Dorsolateral prefrontal cortex (tissue), 120 donors: ENCODE measurements at regions of chr18 and their contacts with region 1.

Region 1: DNA sequence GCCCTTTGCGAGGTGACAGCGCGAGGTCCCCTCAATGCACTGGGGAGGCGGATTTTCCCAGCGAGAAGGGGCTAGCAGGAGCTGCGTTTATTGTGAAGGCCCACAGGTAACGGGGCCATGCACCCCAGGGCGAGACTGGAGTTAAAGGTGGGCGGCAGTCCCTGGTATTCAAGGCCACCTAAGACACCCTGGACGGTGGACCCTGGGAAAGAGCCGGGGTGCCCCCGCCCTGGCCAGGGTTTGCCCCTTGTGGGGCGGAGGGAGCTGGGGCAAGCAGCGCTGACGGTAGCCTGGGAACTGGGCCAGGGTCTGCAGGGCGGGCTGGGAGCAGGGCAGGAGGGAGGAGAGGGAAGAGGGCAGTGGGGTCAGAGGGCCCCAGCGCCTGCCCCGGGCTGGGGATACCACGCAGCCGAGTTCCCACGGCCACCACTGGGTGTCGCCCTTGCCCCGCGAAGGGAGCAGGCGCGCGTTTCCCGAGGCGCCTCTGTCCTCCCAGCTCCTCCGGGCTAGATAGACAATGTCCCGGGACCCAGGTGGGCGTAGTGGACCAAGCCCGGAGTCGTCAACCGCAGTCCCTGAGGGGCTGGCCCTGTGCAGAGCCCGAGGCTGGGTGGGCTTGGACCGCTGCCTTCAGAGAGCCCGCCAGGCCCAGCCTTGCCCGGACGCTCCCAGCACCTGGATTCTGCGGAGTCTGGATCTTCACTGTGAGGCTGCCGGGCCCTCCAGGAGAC is 80.2 kb downstream of the SMAD4 start:
- DNase-seq: peak; percentile 46 to 84 (median 58)
- H3K4me3 ChIP-seq: peak overlapping the region in 27 of 59 donors; percentile 14 to 51 (median 37)
- H3K27ac ChIP-seq: no peak overlapping the region
- H3K27me3 ChIP-seq: no peaks in the 10 kb centered on the region
- CTCF ChIP-seq: peak in 55 of 56 donors; percentile 69 to 98 (median 93)

Region 2: GRCh38 chr18:51621113-51621863 is 511.1 kb after region 1 on chr18:
- intact Hi-C with region 1: loop called in 1 of 2 experiments (anchors 10 kb)
- DNase-seq: peak; percentile 57 to 87 (median 80)
- H3K4me3 ChIP-seq: peak overlapping the region in 48 of 59 donors; percentile 3 to 56 (median 26)
- H3K27ac ChIP-seq: no peak overlapping the region
- H3K27me3 ChIP-seq: no peaks in the 10 kb centered on the region
- CTCF ChIP-seq: peak; percentile 66 to 93 (median 84)

Region 3: GRCh38 chr18:51668101-51668500 is 557.9 kb after region 1 on chr18:
- intact Hi-C with region 1: loop called in 1 of 2 experiments (anchors 5 kb)
- DNase-seq: peak; percentile 32 to 80 (median 58)
- H3K4me3 ChIP-seq: peak overlapping the region in 35 of 59 donors; percentile 4 to 59 (median 31)
- H3K27ac ChIP-seq: no peak overlapping the region
- H3K27me3 ChIP-seq: no peaks in the 10 kb centered on the region
- CTCF ChIP-seq: peak; percentile 75 to 98 (median 90)